Calu3 (cell line): ENCODE measurements at regions of chr1 and their contacts with region 1.

Region 1: DNA sequence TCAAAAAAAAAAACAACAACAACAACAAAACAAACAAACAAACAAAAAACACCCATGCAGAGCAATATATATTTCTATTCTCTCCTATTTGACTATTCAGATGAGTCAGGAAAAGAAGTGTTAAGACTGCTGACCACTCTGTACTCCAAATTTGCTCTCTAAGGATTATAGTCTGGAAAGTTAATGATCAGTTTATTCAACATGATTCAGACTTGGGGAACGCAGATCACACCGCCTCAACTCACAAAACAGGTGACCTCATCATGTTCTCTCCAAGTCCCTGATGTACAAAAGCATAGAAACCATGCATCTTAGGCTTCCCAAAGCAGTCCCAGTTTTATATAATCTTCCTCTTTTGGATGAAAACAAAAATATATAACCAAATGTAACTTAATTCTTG is 51.9 kb upstream of the PRRC2C start:
- DNase-seq: peak; percentile 51
- H3K4me3 Mint-ChIP-seq: no peak overlapping the region
- H3K27ac Mint-ChIP-seq: peak overlapping the region; percentile 94
- H3K4me1 Mint-ChIP-seq: peaks cover 42% of the 10 kb centered on the region
- H3K27me3 Mint-ChIP-seq: no peaks in the 10 kb centered on the region
- CTCF ChIP-seq: no peak

Region 2: GRCh38 chr1:170063109-170063826 is 1370.2 kb before region 1 on chr1:
- CTCF ChIA-PET with region 1: no interaction called
- intact Hi-C with region 1: no loop called
- DNase-seq: peak; percentile 41
- H3K4me3 Mint-ChIP-seq: peak overlapping the region; percentile 34
- H3K27ac Mint-ChIP-seq: peak overlapping the region; percentile 87
- H3K4me1 Mint-ChIP-seq: peaks cover 22% of the 10 kb centered on the region
- H3K27me3 Mint-ChIP-seq: no peaks in the 10 kb centered on the region
- CTCF ChIP-seq: no peak

Region 3: GRCh38 chr1:171467618-171468017 is 34.2 kb after region 1 on chr1:
- CTCF ChIA-PET with region 1: no interaction called
- intact Hi-C with region 1: no loop called
- DNase-seq: no peak
- H3K4me3 Mint-ChIP-seq: no peak overlapping the region
- H3K27ac Mint-ChIP-seq: no peak overlapping the region
- H3K4me1 Mint-ChIP-seq: no peaks in the 10 kb centered on the region
- H3K27me3 Mint-ChIP-seq: no peaks in the 10 kb centered on the region
- CTCF ChIP-seq: no peak

Region 4: GRCh38 chr1:171485375-171486047 is 52.1 kb after region 1 on chr1 and contains the start of gene PRRC2C:
- CTCF ChIA-PET with region 1: interaction called, 3 read pairs
- intact Hi-C with region 1: loop called (anchors 2 kb)
- DNase-seq: peak; percentile 96
- H3K4me3 Mint-ChIP-seq: peak within 1 kb of the TSS; percentile 99
- H3K27ac Mint-ChIP-seq: peak within 1 kb of the TSS; percentile 99
- H3K4me1 Mint-ChIP-seq: peaks cover 43% of the 10 kb centered on the region
- H3K27me3 Mint-ChIP-seq: no peaks in the 10 kb centered on the region
- CTCF ChIP-seq: peak; percentile 49
- total RNA-seq, gene PRRC2C: 227 and 238 TPM in 2 replicates

Region 5: GRCh38 chr1:171550050-171550449 is 116.6 kb after region 1 on chr1:
- CTCF ChIA-PET with region 1: no interaction called
- intact Hi-C with region 1: no loop called
- DNase-seq: no peak
- H3K4me3 Mint-ChIP-seq: no peak overlapping the region
- H3K27ac Mint-ChIP-seq: no peak overlapping the region
- H3K4me1 Mint-ChIP-seq: peaks cover 19% of the 10 kb centered on the region
- H3K27me3 Mint-ChIP-seq: no peaks in the 10 kb centered on the region
- CTCF ChIP-seq: no peak

Region 6: DNA sequence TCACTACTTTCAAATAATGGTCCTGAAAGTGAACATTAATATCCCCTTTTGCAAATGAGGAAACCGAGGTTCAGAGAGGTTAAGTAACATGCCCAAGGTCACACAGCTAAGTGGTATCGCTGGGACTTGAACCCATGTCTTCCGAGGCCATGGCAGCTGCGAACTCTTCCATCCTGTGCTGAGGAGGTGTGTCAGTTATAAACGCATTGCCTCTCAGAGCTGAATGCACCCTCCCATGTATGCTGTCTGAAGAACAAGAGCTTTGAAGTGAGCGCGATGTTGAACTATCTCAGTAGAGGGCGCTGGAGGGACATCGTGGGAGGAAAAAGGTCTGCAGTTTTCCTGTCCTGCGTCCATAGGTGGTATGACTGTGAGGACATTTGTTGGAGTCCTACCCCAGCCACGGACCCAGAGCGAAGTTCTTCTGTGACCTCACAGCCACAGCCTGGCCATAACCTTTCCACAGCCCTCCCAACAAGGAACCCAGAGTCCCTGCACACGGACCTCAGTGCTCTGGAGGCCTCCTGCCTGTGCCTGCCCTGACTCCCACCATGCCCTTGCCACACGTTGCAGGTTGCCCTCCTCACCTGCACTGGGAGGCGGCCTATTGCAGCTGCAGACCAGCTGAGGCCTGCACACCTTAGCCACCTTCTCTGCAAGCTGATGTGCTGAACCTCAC is 211.5 kb after region 1 on chr1:
- CTCF ChIA-PET with region 1: no interaction called
- intact Hi-C with region 1: no loop called
- DNase-seq: peak; percentile 87
- H3K4me3 Mint-ChIP-seq: peak overlapping the region; percentile 2
- H3K27ac Mint-ChIP-seq: no peak overlapping the region
- H3K4me1 Mint-ChIP-seq: peaks cover 25% of the 10 kb centered on the region
- H3K27me3 Mint-ChIP-seq: peaks cover 19% of the 10 kb centered on the region
- CTCF ChIP-seq: peak; percentile 88